ENCODE measurements at regions of chr15 and their contacts with region 1.

Region 1: DNA sequence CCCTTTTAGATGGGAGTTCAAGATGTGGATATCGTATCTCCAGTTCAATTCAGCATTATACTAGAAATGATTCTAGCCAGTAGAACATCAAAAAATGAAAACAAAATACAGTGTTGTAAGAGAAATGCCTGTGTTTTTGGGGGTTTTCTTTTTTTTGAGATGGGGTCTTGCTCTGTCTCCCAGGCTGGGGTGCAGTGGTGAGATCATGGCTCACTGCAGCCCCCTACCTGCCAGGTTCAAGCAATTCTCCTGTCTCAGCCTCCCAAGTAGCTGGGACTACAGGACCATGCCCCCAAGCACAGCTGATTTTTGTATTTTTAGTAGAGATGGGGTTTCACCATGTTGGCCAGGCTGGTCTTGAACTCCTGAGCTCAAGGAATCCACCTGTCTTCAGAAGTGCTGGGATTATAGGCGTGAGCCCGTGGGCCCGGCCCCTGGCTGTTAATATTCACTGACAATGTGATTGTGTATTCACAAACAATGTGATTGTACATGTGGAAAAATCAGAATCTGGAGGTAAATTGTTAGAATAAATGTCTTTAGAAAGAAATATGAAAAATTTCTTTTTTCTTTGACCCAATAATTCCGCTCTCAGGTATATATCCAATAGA is 59.0 kb downstream of the ARIH1 start:
- DNase-seq: peak in 2 of 5 donors; percentile 21 to 25
- H3K4me3 ChIP-seq: no peak overlapping the region
- H3K4me3 Mint-ChIP-seq: no peak overlapping the region
- H3K27ac ChIP-seq: no peak overlapping the region
- H3K27ac Mint-ChIP-seq: peak overlapping the region in 3 of 8 donors; percentile 41 to 66 (median 57)
- H3K4me1 ChIP-seq: peaks cover 34% of the 10 kb centered on the region
- H3K4me1 Mint-ChIP-seq: peaks cover 44 to 79% (median 78%) of the 10 kb centered on the region in 3 donors
- H3K27me3 ChIP-seq: no peaks in the 10 kb centered on the region
- H3K27me3 Mint-ChIP-seq: no peaks in the 10 kb centered on the region

Region 2: DNA sequence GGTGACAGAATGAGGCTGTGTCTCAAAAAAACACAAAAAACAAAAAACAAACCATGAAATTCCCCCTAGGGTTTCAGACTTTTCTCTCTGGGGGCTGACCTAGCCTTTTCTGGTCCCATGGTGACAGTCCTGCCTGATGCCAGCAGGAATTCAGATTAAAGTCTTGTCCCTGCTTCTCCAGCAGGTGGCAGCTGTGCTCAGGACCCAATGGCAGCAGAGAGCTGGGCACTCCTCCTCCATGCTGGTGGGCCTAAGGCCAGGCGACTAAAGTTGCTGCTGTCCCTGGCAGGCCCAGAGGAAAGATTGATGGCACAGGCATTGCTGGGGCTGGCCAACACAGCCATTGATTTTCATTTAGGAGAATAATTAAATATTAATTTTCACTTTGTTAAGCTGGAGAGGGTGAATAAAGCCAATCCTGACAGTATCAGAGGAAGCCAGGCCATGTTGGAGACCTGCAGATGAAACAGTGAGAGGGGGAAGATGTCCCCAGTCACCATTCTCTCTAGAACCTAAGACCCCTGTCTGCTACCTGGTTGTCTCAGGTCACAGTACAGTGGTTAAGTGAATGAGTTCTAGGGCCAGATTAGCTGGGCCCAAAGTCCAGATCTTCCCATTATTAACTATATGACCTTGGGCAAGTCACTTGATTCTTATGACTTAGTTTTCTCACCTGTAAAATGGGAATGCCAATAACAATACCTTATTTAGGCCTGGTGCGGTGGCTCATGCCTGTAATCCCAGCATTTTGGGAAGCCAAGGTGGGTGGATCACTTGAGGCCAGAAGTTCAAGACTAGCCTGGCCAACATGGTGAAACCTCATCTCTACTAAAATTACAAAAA is 220.3 kb before region 1 on chr15:
- CTCF ChIA-PET with region 1: interaction called, 15 read pairs
- POLR2A ChIA-PET with region 1: no interaction called
- DNase-seq: peak; percentile 33 to 73 (median 45)
- H3K4me3 ChIP-seq: no peak overlapping the region
- H3K4me3 Mint-ChIP-seq: no peak overlapping the region
- H3K27ac ChIP-seq: no peak overlapping the region
- H3K27ac Mint-ChIP-seq: peak overlapping the region in 1 of 8 donors; percentile 36
- H3K4me1 ChIP-seq: no peaks in the 10 kb centered on the region
- H3K4me1 Mint-ChIP-seq: no peaks in the 10 kb centered on the region
- H3K27me3 ChIP-seq: no peaks in the 10 kb centered on the region
- H3K27me3 Mint-ChIP-seq: peaks cover 0 to 3% of the 10 kb centered on the region in 2 donors

Region 3: DNA sequence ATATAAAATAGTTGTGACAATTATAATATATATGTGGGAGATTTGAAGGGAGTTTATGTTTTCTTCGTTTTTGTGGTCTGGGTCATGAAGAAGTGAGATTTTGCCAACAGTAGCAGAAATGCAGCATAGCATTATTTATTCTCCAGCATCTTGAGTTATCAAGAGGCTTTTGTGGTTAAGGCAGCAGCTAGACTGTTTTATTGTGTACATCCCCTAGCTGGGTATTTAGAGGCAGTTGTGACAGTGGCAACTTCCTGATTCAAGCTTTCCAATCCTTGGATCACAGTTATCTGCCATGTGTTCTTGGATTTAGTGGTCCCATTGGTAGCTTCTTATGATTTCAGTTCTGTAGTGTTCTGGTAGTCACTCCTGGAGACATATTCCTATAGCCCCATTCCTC is 29.9 kb before region 1 on chr15:
- CTCF ChIA-PET with region 1: no interaction called
- POLR2A ChIA-PET with region 1: no interaction called
- DNase-seq: no peak
- H3K4me3 ChIP-seq: no peak overlapping the region
- H3K4me3 Mint-ChIP-seq: peak overlapping the region in 3 of 7 donors; percentile 4 to 22 (median 6)
- H3K27ac ChIP-seq: no peak overlapping the region
- H3K27ac Mint-ChIP-seq: peak overlapping the region in 7 of 8 donors; percentile 8 to 70 (median 37)
- H3K4me1 ChIP-seq: peaks cover 33% of the 10 kb centered on the region
- H3K4me1 Mint-ChIP-seq: peaks cover 59 to 87% (median 83%) of the 10 kb centered on the region in 3 donors
- H3K27me3 ChIP-seq: no peaks in the 10 kb centered on the region
- H3K27me3 Mint-ChIP-seq: peaks cover 0 to 1% of the 10 kb centered on the region in 2 donors